Motor neuron (in vitro differentiated cells): ENCODE measurements at regions of chr7 and their contacts with region 1.

Region 1: DNA sequence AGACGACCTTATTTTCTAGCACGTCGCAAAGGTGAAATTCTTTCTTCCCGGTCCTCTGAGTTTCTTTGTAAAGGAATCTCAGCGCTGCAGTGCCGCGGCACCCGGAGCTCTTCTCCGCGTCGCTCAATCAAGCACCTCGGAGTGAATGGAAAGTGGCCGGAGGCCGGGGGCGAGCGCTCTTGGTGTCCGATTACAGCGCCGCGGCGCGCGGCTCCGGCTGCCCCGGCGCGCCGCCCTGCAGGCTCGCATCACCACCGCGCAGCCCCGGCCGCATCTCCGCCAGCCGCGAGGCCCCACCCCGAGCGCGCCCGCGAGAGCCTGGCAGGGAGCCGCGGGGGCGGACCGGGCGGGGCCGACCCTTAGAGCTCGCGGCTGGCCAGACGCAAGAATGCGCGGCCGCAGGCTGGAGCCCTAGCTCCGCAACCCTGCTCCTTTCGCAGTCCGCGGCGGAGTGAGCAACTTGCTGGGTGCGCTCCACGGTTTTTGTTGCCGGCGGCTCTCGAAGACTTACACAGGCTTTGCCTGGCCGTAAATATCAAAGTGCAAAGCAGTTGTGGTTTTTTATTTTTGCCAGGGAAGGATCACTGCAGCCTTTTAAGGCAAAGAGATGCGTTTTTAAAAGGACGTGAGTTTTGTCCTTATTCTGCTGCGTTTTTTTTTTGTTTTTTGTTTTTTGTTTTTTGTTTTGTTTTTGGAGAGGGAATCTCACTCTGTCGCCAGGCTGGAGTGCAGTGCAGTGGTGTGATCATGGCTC is at the start of gene SEMA3C:
- ATAC-seq: peak; percentile 95 to 99 (median 96)
- H3K4me3 ChIP-seq: peak within 1 kb of the TSS; percentile 47 to 57 (median 51)
- H3K27ac ChIP-seq: peak within 1 kb of the TSS; percentile 8 to 69
- H3K4me1 ChIP-seq: peaks cover 12 to 28% of the 10 kb centered on the region in 2 donors
- total RNA-seq, gene SEMA3C: 32.2 to 219 (median 49.9) TPM

Region 2: GRCh38 chr7:80722616-80723141 is 196.4 kb before region 1 on chr7:
- in situ Hi-C with region 1: loop called in 3 of 9 experiments (anchors 25 kb)
- ATAC-seq: peak; percentile 29 to 87 (median 45)
- H3K4me3 ChIP-seq: no peak overlapping the region
- H3K27ac ChIP-seq: no peak overlapping the region
- H3K4me1 ChIP-seq: peaks cover 42 to 51% of the 10 kb centered on the region in 2 donors

Region 3: DNA sequence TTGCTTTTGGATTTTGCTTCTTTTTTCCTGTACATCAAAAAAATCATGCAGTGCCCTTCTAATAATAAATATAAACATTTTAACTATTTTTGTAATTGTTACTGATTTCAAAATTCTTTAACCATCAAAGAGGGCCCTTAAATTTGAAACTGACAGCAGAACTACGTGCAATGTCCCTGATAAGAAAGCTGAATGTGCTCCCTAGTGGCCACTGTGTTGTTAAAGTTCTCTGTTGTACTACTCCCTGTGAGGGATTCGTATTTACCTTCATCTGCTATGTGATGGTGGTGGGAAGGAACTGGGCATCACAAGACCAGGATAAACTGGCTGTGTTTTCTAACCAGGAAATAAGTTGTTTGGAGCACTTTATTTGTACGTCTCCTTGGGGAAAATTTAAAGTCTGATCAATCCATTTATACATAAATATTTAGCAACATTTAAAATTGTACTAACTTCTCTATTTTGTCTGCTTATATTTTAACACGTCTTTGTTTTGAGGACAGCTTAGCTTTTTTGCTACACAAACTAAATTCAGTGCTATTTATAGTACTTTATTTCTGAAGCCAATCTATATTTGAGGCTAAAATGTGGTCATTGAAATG is 528.4 kb after region 1 on chr7:
- in situ Hi-C with region 1: loop called in 5 of 9 experiments (anchors 10 to 25 kb)
- ATAC-seq: peak; percentile 39 to 93 (median 74)
- H3K4me3 ChIP-seq: no peak overlapping the region
- H3K27ac ChIP-seq: no peak overlapping the region
- H3K4me1 ChIP-seq: no peaks in the 10 kb centered on the region